ENCODE measurements at regions of chr5 and their contacts with region 1.

Region 1: DNA sequence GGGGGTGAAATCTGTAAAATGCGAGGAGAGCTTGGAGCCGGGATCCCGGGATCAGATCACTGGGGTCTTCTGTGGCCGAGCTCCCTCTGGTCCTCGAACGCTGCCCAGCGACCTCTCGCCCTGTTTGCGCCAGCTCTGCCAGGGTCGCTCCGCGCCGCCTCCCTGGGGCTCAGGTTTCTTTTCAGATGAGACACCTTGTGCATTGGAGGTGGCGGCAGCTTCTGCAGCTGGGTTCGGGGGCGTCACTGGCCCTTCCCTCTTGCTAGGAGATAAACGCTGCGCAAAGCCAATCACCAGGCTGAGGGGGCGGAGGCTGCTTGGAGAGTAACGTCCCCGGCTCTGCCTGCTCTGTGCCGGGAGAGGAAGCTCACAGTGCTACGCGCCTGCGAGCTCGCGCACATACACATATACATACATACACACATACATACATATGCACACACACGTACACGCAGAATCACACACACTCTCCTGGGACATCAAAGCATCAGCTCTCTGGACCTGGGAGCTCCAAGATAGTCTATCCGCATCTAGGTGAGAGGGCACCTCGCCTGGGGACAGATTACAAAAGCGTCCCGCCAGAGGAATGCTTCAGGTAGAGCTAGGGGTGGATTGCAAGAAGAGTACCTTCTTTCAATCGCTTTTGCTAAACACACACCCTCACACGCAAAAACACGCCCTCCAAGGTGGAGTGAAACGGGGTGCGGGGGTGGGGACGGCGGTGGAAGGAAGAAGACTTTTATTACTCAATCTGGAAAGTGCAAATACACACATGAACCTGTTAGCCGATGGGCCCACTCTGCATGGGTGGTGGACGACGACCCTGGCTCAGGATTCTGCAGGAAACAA is at the start of gene ST8SIA4:
- DNase-seq: peak; percentile 95
- H3K4me3 Mint-ChIP-seq: peak within 1 kb of the TSS; percentile 97
- H3K27ac Mint-ChIP-seq: peak within 1 kb of the TSS; percentile 99
- H3K4me1 Mint-ChIP-seq: peaks cover 34% of the 10 kb centered on the region
- H3K27me3 Mint-ChIP-seq: no peaks in the 10 kb centered on the region
- total RNA-seq, gene ST8SIA4: 69.4 to 72.1 TPM

Region 2: GRCh38 chr5:100777680-100778281 is 125.5 kb before region 1 on chr5:
- CTCF ChIA-PET with region 1: interaction called, 19 read pairs
- POLR2A ChIA-PET with region 1: interaction called, 97 read pairs
- DNase-seq: no peak
- H3K4me3 Mint-ChIP-seq: no peak overlapping the region
- H3K27ac Mint-ChIP-seq: peak overlapping the region; percentile 55
- H3K4me1 Mint-ChIP-seq: peaks cover 37% of the 10 kb centered on the region
- H3K27me3 Mint-ChIP-seq: no peaks in the 10 kb centered on the region

Region 3: GRCh38 chr5:100840384-100840783 is 62.9 kb before region 1 on chr5:
- CTCF ChIA-PET with region 1: interaction called, 26 read pairs
- POLR2A ChIA-PET with region 1: interaction called, 189 read pairs
- DNase-seq: no peak
- H3K4me3 Mint-ChIP-seq: no peak overlapping the region
- H3K27ac Mint-ChIP-seq: peak overlapping the region; percentile 88
- H3K4me1 Mint-ChIP-seq: peaks cover 74% of the 10 kb centered on the region
- H3K27me3 Mint-ChIP-seq: no peaks in the 10 kb centered on the region

Region 4: DNA sequence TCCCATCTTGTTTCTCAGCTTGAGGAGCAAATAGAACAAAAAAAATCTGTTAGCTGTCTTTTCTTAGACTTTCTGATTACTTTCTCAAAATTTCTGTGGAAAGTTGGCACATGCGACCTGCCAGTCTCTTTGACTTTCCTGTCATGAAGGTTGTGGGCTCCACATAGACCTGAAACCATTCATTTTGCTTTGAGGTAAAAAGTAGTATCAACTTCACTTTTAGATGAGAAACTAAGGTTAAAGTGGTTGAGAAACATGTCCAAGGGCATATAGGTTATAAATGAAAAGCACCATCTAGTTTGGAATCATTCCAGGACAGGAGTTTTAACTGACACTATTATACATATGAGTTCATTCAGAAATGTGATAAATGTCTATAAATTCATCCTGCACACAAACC is 42.9 kb before region 1 on chr5:
- CTCF ChIA-PET with region 1: interaction called, 5 read pairs
- POLR2A ChIA-PET with region 1: interaction called, 148 read pairs
- DNase-seq: no peak
- H3K4me3 Mint-ChIP-seq: no peak overlapping the region
- H3K27ac Mint-ChIP-seq: peak overlapping the region; percentile 61
- H3K4me1 Mint-ChIP-seq: peaks cover 66% of the 10 kb centered on the region
- H3K27me3 Mint-ChIP-seq: no peaks in the 10 kb centered on the region

Region 5: DNA sequence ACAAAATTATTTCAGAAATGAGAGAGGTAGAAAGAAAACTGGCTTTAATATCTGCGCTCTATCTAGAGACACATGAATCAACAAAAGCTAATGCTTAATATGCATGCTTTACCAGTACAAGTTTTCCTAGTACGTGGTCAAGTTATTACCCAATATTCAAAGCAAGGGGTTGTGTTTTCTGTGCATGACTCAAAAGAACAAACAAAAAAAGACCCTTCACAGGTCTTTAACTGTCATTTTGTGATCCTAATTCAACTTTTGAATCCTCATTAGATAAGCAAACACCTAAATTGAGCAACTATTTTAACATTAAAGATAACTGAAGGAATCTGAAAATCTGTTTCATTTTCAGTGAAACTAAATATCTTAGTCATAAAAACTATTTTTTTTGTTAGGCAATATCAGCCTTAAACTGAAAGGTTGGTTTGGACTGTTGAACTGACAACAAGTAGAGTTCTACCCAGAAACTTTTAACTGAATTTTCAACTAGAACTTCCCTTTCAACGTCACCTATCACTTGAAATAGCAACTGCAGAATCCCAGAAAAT is 12.7 kb before region 1 on chr5:
- CTCF ChIA-PET with region 1: interaction called, 49 read pairs
- POLR2A ChIA-PET with region 1: interaction called, 413 read pairs
- DNase-seq: no peak
- H3K4me3 Mint-ChIP-seq: peak overlapping the region; percentile 73
- H3K27ac Mint-ChIP-seq: peak overlapping the region; percentile 96
- H3K4me1 Mint-ChIP-seq: peaks cover 69% of the 10 kb centered on the region
- H3K27me3 Mint-ChIP-seq: no peaks in the 10 kb centered on the region

Measured in activated CD4-positive, alpha-beta memory T cell treated with anti-CD3 and anti-CD28 coated beads, Interleukin-2, amount 10 ng/mL, durations not matched to agents 7 days and 5 days (primary cell).